Psoas muscle (tissue), 8 donors: ENCODE measurements at regions of chr7 and their contacts with region 1.

Region 1: GRCh38 chr7:114979388-114979787 is 57.5 kb downstream of the MDFIC start:
- DNase-seq: peak; percentile 25 to 62
- ATAC-seq: peak; percentile 96 to 98 (median 97)
- H3K4me3 ChIP-seq: peak overlapping the region; percentile 52
- H3K27ac ChIP-seq: peak overlapping the region; percentile 86
- H3K4me1 ChIP-seq: peaks cover 25% of the 10 kb centered on the region
- H3K27me3 ChIP-seq: no peaks in the 10 kb centered on the region
- CTCF ChIP-seq: no peak

Region 2: GRCh38 chr7:114944745-114945625 is 34.4 kb before region 1 on chr7:
- intact Hi-C with region 1: loop called in 1 of 2 experiments (anchors 5 kb)
- DNase-seq: peak; percentile 84 to 92
- ATAC-seq: peak; percentile 90 to 99 (median 98)
- H3K4me3 ChIP-seq: peak overlapping the region; percentile 61
- H3K27ac ChIP-seq: peak overlapping the region; percentile 72
- H3K4me1 ChIP-seq: peaks cover 14% of the 10 kb centered on the region
- H3K27me3 ChIP-seq: no peaks in the 10 kb centered on the region
- CTCF ChIP-seq: no peak